ENCODE measurements at regions of chr11 and their contacts with region 1.

Region 1: DNA sequence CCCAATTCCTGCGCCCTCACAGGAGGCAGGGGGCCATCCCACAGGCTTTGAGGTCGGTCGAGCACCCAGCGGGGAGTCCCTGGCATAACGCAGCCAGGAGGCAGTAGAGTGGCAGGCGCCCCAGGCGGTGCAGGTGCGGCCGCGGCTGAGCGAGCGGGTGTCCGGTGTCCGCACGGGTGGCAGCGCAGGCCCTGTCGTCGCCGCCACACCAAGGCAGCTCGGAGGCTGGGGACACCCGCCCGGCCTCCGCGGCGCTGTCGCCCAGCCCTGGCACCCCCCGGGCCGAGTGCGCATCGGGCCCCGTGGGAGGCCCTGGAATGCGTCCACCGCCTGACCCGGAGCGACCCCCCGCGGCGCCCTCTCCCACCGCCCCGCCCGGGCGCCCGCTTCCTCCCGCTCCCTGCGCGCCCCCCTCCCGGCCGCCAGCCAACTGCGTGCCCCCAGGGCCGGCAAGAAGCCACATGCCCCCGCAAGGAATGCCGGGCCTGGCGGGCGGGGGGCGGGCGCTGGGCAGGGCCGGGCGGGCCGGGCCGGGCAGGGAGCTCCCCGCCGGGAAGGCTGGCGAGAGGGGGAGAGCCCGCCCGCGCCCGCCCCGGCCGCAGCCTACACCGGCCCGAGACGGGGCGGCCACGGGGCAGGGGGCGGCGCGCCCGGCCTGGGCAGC is 33.9 kb downstream of the PRDM11 start:
- DNase-seq: peak; percentile 58 to 72
- ATAC-seq: peak; percentile 77 to 78
- H3K4me3 ChIP-seq: peak overlapping the region; percentile 48 to 64 (median 53)
- H3K27ac ChIP-seq: peak overlapping the region; percentile 73 to 84 (median 78)
- H3K4me1 ChIP-seq: peaks cover 10 to 16% of the 10 kb centered on the region in 2 donors
- H3K27me3 ChIP-seq: no peaks in the 10 kb centered on the region
- CTCF ChIP-seq: peak; percentile 46 to 71 (median 57)
- POLR2A ChIP-seq: peak in 1 of 2 donors; percentile 29

Region 2: GRCh38 chr11:44833877-44834452 is 346.3 kb before region 1 on chr11:
- in situ Hi-C with region 1: no loop called
- intact Hi-C with region 1: no loop called
- DNase-seq: no peak
- ATAC-seq: no peak
- H3K4me3 ChIP-seq: no peak overlapping the region
- H3K27ac ChIP-seq: peak overlapping the region; percentile 29 to 64 (median 46)
- H3K4me1 ChIP-seq: no peaks in the 10 kb centered on the region
- H3K27me3 ChIP-seq: peaks cover 0 to 5% (median 2%) of the 10 kb centered on the region in 3 donors
- CTCF ChIP-seq: no peak
- POLR2A ChIP-seq: no peak

Region 3: DNA sequence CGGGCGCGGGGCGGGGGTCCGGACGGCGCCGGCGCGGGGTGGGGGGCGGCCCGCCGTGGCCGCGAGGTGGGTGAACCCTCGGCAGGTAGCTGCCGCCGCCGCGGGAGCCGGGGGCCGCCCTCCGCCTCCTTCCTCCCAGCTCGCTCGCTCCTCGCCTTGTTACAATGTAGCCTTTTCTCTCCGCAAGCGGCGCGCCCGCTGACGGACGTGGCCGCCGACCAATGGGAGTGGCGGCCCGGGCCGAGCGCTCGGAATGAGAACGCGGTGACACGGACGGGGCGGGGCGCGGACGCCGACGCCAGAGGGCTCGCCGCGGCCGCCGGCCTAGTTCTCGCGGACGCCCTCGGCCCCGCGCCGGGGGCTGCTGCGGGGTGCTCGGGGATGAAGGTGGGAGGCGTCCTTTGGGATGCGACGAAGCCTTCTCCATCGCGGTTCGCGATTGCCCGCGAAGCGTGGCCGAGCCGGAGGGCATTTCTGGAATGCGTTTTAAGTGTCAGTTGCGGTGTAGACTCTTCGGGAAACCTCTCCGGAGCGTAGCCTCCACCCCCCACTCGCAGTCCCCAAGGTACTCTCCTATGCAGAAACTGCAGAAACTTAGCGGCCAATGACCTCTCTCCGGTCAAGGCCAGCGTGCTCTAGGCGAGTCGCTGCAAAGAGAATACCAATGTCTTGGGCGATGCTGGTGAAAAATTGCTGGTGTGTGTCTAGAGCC is 33.1 kb before region 1 on chr11:
- in situ Hi-C with region 1: no loop called
- intact Hi-C with region 1: loop called (anchors 1 kb)
- DNase-seq: peak; percentile 89 to 95
- ATAC-seq: peak; percentile 92 to 95
- H3K4me3 ChIP-seq: peak overlapping the region; percentile 80 to 87 (median 84)
- H3K27ac ChIP-seq: peak overlapping the region; percentile 95 to 100 (median 98)
- H3K4me1 ChIP-seq: peaks cover 16 to 22% of the 10 kb centered on the region in 2 donors
- H3K27me3 ChIP-seq: no peaks in the 10 kb centered on the region
- CTCF ChIP-seq: peak in 2 of 5 experiments; percentile 17 to 18
- POLR2A ChIP-seq: peak; percentile 63 to 81

Region 4: DNA sequence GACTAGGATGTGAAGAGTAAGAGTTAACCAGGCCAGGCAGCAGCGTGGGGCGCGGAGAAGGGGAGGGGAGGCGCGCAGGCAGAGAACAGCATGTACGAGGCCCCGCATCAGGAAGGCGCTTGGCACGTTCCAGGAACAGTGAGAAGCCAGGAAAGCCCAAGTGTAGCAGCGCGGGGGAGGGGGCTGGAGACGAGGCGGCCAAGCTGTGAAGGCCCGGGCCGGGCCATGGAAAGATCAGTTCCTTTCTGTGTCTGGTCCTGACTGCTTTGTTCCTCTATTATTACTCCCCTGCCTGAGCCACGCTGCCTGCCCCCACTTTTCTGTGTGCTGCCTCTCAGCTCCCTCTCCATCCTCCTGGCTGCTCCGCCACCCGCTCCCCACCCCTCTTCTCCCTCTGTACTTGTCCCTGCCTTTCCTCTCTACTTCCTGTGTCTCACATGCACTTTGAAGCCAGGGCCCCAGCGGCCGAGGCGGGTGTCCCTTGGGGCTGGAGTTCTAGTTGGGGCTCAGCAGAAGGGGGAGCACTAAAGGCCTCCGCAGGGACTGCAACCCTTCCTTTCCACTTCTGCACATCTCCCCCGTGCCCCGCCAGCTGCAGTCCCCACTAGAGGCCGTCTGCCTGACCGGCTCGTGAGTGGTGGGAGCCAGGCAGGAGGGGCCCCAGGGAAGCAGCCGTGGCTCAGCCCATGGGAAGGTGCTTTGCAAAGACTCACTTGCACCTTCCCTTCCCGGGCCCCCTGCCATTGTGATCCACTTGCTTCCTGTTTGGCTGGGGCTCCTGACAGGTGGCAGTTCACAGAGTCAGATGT is 29.8 kb after region 1 on chr11:
- in situ Hi-C with region 1: no loop called
- intact Hi-C with region 1: loop called (anchors 2 kb)
- DNase-seq: peak; percentile 79 to 80
- ATAC-seq: peak; percentile 86 to 87
- H3K4me3 ChIP-seq: peak overlapping the region; percentile 23 to 52 (median 33)
- H3K27ac ChIP-seq: peak overlapping the region; percentile 53 to 86 (median 75)
- H3K4me1 ChIP-seq: peaks cover 27 to 55% of the 10 kb centered on the region in 2 donors
- H3K27me3 ChIP-seq: no peaks in the 10 kb centered on the region
- CTCF ChIP-seq: peak in 1 of 5 experiments; percentile 17
- POLR2A ChIP-seq: no peak

Region 5: GRCh38 chr11:45233121-45233803 is 53.0 kb after region 1 on chr11:
- in situ Hi-C with region 1: no loop called
- intact Hi-C with region 1: loop called (anchors 2 kb)
- DNase-seq: peak; percentile 15 to 56
- ATAC-seq: peak; percentile 79 to 87
- H3K4me3 ChIP-seq: no peak overlapping the region
- H3K27ac ChIP-seq: no peak overlapping the region
- H3K4me1 ChIP-seq: no peaks in the 10 kb centered on the region
- H3K27me3 ChIP-seq: peaks cover 0 to 6% (median 0%) of the 10 kb centered on the region in 3 donors
- CTCF ChIP-seq: peak; percentile 55 to 89 (median 77)
- POLR2A ChIP-seq: no peak

Region 6: DNA sequence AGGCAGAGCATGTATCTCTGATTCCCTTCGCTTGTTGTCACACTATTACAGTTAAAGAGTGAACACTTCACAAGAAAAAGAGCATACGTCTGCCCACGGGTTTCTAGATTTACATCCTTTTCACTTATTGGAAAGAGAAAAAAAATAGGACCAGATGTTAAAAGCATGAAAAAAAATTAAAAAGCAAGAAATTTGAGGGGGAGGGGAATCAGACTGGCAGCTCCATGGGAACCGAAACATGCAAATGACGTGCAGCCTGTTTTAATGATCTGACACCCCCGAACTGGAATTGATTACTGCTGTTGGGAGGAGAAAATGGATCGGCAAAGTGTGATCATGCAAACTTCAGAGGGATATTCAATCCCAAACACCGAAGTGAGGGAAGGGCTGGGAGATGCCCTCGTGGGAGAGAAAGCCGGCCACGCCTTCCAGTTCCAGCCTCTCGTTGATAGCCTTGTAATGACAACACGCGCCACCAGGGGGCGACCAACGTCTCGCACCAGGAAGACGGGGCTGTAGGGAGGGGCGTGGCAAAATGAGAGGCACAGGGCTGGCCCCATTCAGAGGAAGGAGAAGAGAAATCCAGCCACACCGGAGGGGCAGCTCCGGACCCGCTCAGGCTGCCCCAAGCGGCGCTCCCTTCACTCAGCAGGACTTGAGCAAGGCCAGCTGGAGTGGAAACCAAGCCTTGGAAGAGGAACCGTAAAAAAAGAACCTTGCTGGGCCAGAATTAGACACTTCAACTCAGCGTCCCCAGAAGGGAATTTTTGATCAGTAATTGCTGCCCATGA is 159.6 kb after region 1 on chr11:
- in situ Hi-C with region 1: no loop called
- intact Hi-C with region 1: loop called (anchors 10 kb)
- DNase-seq: peak; percentile 70 to 86
- ATAC-seq: peak; percentile 96 to 99
- H3K4me3 ChIP-seq: peak overlapping the region; percentile 1 to 34 (median 19)
- H3K27ac ChIP-seq: no peak overlapping the region
- H3K4me1 ChIP-seq: peaks cover 10 to 14% of the 10 kb centered on the region in 2 donors
- H3K27me3 ChIP-seq: peaks cover 0 to 6% (median 0%) of the 10 kb centered on the region in 3 donors
- CTCF ChIP-seq: peak; percentile 86 to 90 (median 87)
- POLR2A ChIP-seq: no peak

Region 7: GRCh38 chr11:45444796-45445195 is 264.5 kb after region 1 on chr11:
- in situ Hi-C with region 1: no loop called
- intact Hi-C with region 1: no loop called
- DNase-seq: no peak
- ATAC-seq: no peak
- H3K4me3 ChIP-seq: no peak overlapping the region
- H3K27ac ChIP-seq: no peak overlapping the region
- H3K4me1 ChIP-seq: no peaks in the 10 kb centered on the region
- H3K27me3 ChIP-seq: peaks cover 0 to 12% (median 8%) of the 10 kb centered on the region in 3 donors
- CTCF ChIP-seq: no peak
- POLR2A ChIP-seq: no peak

Region 8: GRCh38 chr11:45872513-45873356 is 692.4 kb after region 1 on chr11:
- in situ Hi-C with region 1: no loop called
- intact Hi-C with region 1: no loop called
- DNase-seq: peak in 1 of 2 donors; percentile 45
- ATAC-seq: peak; percentile 53 to 75
- H3K4me3 ChIP-seq: no peak overlapping the region
- H3K27ac ChIP-seq: no peak overlapping the region
- H3K4me1 ChIP-seq: no peaks in the 10 kb centered on the region
- H3K27me3 ChIP-seq: no peaks in the 10 kb centered on the region
- CTCF ChIP-seq: peak; percentile 39 to 66 (median 50)
- POLR2A ChIP-seq: no peak

Measured in gastrocnemius medialis (tissue), 4 donors.